Activated CD4-positive, alpha-beta memory T cell treated with anti-CD3 and anti-CD28 coated beads, Interleukin-2, amount 10 ng/mL, durations not matched to agents 7 days and 5 days (primary cell): ENCODE measurements at regions of chr20 and their contacts with region 1.

Region 1: DNA sequence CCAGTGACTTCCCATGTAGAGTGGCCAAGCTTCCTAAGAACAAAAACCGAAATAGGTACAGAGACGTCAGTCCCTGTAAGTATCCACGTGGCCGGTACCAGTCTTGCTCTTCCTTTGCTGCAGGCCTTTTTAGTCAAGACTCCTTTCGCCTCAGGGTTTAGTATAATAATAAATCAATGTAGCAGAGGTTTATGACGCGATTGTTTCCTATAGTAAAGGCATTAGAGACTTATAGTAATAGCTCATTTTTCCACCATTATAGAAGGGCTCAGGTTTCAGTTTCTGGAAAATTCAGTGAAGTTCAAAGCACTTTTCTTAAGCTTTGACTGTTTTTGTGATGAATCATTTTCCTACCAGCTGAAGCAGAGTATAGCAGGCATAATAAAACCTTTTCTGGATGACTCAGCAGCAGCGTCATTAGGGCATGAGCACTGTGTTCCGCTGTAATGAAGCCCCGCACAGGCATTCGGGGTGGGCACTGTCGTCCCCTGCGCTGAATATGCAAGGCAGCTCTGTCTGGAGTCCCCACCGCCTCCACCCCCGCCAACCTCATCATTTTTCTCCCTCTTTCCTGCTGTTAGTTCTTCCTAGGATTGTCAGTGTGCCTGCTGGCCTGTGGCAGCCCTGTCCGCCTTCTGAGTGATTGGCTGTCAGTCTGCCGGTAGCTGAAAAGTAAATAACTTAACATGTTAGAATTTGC is 51.3 kb downstream of the PTPN1 start:
- DNase-seq: peak; percentile 54
- H3K4me3 Mint-ChIP-seq: peak overlapping the region; percentile 32
- H3K27ac Mint-ChIP-seq: peak overlapping the region; percentile 85
- H3K4me1 Mint-ChIP-seq: peaks cover 60% of the 10 kb centered on the region
- H3K27me3 Mint-ChIP-seq: no peaks in the 10 kb centered on the region

Region 2: DNA sequence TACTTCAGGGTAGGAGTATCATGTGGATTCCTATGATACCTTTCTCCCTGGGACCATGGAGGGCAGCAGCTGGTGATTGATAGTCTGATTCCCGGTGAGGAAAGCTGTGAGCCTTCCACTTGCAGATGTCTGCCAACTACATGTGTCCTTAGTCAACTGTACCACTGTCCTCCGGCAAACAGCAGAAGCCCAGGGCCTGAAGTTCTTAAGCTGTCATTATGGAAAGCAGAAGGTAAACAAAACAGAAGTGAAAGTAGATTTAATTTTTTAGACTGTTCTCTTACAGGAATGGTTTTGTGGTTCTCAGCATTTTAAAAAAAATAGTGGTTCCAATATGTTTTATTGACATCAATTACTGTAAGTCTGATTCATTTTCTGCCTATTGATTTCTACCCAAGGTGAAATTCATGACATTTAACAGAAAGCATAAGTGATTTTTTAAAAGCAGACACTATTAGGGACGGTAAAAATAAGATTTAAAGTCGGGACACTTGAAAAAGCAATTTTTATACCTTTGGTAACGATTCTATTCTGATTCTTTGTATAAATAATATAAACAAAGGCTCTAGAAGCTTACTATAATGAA is 14.7 kb before region 1 on chr20:
- CTCF ChIA-PET with region 1: interaction called, 17 read pairs
- POLR2A ChIA-PET with region 1: interaction called, 32 read pairs
- DNase-seq: no peak
- H3K4me3 Mint-ChIP-seq: peak overlapping the region; percentile 57
- H3K27ac Mint-ChIP-seq: peak overlapping the region; percentile 73
- H3K4me1 Mint-ChIP-seq: peaks cover 65% of the 10 kb centered on the region
- H3K27me3 Mint-ChIP-seq: no peaks in the 10 kb centered on the region

Region 3: GRCh38 chr20:50680412-50680908 is 118.9 kb after region 1 on chr20:
- CTCF ChIA-PET with region 1: no interaction called
- POLR2A ChIA-PET with region 1: no interaction called
- DNase-seq: no peak
- H3K4me3 Mint-ChIP-seq: no peak overlapping the region
- H3K27ac Mint-ChIP-seq: no peak overlapping the region
- H3K4me1 Mint-ChIP-seq: no peaks in the 10 kb centered on the region
- H3K27me3 Mint-ChIP-seq: peaks cover 2% of the 10 kb centered on the region